ENCODE measurements at regions of chr1 and their contacts with region 1.

Region 1: GRCh38 chr1:181936768-181937581 is 124.5 kb downstream of the ZNF648 start:
- DNase-seq: peak; percentile 72 to 82 (median 76)
- ATAC-seq: peak; percentile 98
- H3K4me3 ChIP-seq: no peak overlapping the region
- H3K27ac ChIP-seq: no peak overlapping the region
- H3K4me1 ChIP-seq: no peaks in the 10 kb centered on the region
- H3K27me3 ChIP-seq: no peaks in the 10 kb centered on the region
- CTCF ChIP-seq: peak; percentile 85 to 95 (median 88)
- EP300 ChIP-seq: no peak
- POLR2A ChIP-seq: no peak
- RAD21 ChIP-seq: peak; percentile 89 to 96

Region 2: GRCh38 chr1:181424786-181425403 is 512.1 kb before region 1 on chr1:
- CTCF ChIA-PET with region 1: no interaction called
- POLR2A ChIA-PET with region 1: no interaction called
- in situ Hi-C with region 1: no loop called
- intact Hi-C with region 1: loop called (anchors 5 kb)
- DNase-seq: peak; percentile 78 to 87 (median 82)
- ATAC-seq: peak; percentile 92
- H3K4me3 ChIP-seq: no peak overlapping the region
- H3K27ac ChIP-seq: no peak overlapping the region
- H3K4me1 ChIP-seq: no peaks in the 10 kb centered on the region
- H3K27me3 ChIP-seq: peaks cover 3 to 8% of the 10 kb centered on the region in 2 experiments; a peak in 4 of 5 replicates
- CTCF ChIP-seq: peak; percentile 99 to 100 (median 100)
- EP300 ChIP-seq: no peak
- POLR2A ChIP-seq: no peak
- RAD21 ChIP-seq: peak; percentile 85 to 92

Region 3: GRCh38 chr1:181595234-181595633 is 341.7 kb before region 1 on chr1:
- CTCF ChIA-PET with region 1: no interaction called
- POLR2A ChIA-PET with region 1: no interaction called
- in situ Hi-C with region 1: no loop called
- intact Hi-C with region 1: loop called (anchors 5 kb)
- DNase-seq: no peak
- ATAC-seq: no peak
- H3K4me3 ChIP-seq: no peak overlapping the region
- H3K27ac ChIP-seq: no peak overlapping the region
- H3K4me1 ChIP-seq: no peaks in the 10 kb centered on the region
- H3K27me3 ChIP-seq: peaks cover 0 to 6% of the 10 kb centered on the region in 2 experiments; a peak in 1 of 5 replicates
- CTCF ChIP-seq: no peak
- EP300 ChIP-seq: no peak
- POLR2A ChIP-seq: no peak
- RAD21 ChIP-seq: no peak

Region 4: DNA sequence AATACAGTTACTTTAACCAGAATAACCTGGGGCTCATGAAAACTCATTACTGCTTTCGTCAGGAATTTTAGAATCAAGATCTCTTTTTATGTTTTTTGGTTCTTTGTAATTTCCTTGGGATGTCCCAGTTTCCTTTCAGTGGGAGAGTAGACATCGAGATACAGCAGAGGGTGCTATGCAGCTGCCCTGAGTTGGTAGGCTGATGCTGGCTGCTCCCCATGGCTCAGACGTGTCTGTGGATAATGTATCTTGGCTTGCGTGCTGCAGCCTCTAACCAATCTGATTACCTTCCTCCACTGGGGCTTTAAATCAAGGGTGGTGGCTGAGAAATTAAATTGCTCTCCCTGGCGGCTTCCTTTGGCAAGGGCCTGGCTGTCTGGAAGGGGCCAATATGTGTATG is 199.9 kb before region 1 on chr1:
- CTCF ChIA-PET with region 1: interaction called, 18 read pairs
- POLR2A ChIA-PET with region 1: no interaction called
- in situ Hi-C with region 1: no loop called
- intact Hi-C with region 1: loop called (anchors 1 kb)
- DNase-seq: peak; percentile 19 to 28 (median 22)
- ATAC-seq: peak; percentile 65
- H3K4me3 ChIP-seq: no peak overlapping the region
- H3K27ac ChIP-seq: no peak overlapping the region
- H3K4me1 ChIP-seq: peaks cover 0 to 11% of the 10 kb centered on the region in 2 experiments; a peak in 1 of 5 replicates
- H3K27me3 ChIP-seq: peaks cover 0 to 30% of the 10 kb centered on the region in 2 experiments; a peak in 3 of 5 replicates
- CTCF ChIP-seq: peak; percentile 11 to 54 (median 26); a peak in 2 of 6 replicates
- EP300 ChIP-seq: no peak
- POLR2A ChIP-seq: no peak
- RAD21 ChIP-seq: peak; percentile 63 to 67

Measured in K562 (cell line).